Prostate gland (tissue), 2 donors: ENCODE measurements at regions of chr11 and their contacts with region 1.

Region 1: GRCh38 chr11:119356349-119357031 is 10.0 kb upstream of the MFRP start:
- DNase-seq: peak; percentile 56
- H3K4me3 ChIP-seq: peak overlapping the region; percentile 22 to 29
- H3K27ac ChIP-seq: peak overlapping the region; percentile 33 to 54
- H3K4me1 ChIP-seq: no peaks in the 10 kb centered on the region
- H3K27me3 ChIP-seq: no peaks in the 10 kb centered on the region
- CTCF ChIP-seq: peak; percentile 62 to 82 (median 79)
- POLR2A ChIP-seq: no peak

Region 2: DNA sequence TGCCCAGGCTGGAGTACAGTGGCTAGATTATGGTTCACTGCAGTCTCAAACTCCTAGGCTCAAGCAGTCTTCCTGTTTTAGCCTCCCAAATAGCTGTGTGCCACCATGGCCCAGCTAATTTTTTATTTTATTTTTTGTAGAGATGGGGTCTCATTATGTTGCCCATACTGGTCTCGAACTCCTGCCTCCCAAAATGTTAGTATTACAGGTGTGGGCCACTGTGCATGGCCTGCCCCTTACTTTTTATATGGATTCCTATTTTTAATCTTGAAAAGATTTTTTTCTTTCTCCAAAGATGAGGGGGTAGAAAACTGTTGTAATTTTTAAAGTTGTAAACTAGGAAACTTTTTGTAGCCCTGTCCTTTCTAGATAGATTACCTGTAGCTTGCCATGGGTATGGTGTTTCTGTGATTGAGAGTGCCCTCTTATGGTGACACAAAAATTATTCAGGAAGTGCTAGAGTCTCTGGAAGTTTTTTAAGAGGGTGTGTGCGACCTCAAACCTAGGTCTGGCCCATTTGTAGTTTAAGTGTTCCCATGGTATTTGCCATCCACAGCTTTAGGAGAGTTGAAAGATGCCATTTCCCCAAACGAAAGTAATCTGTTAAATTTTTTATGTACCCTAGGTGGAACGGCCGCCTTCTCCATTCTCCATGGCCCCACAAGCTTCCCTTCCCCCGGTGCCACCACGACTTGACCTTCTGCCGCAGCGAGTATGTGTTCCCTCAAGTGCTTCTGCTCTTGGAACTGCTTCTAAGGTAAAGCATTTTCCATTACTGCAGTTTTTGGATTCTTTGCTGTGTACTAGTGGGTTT is 71.9 kb before region 1 on chr11:
- intact Hi-C with region 1: no loop called
- DNase-seq: no peak
- H3K4me3 ChIP-seq: no peak overlapping the region
- H3K27ac ChIP-seq: no peak overlapping the region
- H3K4me1 ChIP-seq: no peaks in the 10 kb centered on the region
- H3K27me3 ChIP-seq: no peaks in the 10 kb centered on the region
- CTCF ChIP-seq: peak in 3 of 4 experiments; percentile 31 to 44 (median 42)
- POLR2A ChIP-seq: no peak

Region 3: GRCh38 chr11:119373921-119374631 is 17.6 kb after region 1 on chr11:
- intact Hi-C with region 1: loop called (anchors 2 kb)
- DNase-seq: peak; percentile 55
- H3K4me3 ChIP-seq: no peak overlapping the region
- H3K27ac ChIP-seq: peak overlapping the region; percentile 77 to 80
- H3K4me1 ChIP-seq: peaks cover 12% of the 10 kb centered on the region
- H3K27me3 ChIP-seq: no peaks in the 10 kb centered on the region
- CTCF ChIP-seq: peak; percentile 59 to 89 (median 74)
- POLR2A ChIP-seq: no peak

Region 4: DNA sequence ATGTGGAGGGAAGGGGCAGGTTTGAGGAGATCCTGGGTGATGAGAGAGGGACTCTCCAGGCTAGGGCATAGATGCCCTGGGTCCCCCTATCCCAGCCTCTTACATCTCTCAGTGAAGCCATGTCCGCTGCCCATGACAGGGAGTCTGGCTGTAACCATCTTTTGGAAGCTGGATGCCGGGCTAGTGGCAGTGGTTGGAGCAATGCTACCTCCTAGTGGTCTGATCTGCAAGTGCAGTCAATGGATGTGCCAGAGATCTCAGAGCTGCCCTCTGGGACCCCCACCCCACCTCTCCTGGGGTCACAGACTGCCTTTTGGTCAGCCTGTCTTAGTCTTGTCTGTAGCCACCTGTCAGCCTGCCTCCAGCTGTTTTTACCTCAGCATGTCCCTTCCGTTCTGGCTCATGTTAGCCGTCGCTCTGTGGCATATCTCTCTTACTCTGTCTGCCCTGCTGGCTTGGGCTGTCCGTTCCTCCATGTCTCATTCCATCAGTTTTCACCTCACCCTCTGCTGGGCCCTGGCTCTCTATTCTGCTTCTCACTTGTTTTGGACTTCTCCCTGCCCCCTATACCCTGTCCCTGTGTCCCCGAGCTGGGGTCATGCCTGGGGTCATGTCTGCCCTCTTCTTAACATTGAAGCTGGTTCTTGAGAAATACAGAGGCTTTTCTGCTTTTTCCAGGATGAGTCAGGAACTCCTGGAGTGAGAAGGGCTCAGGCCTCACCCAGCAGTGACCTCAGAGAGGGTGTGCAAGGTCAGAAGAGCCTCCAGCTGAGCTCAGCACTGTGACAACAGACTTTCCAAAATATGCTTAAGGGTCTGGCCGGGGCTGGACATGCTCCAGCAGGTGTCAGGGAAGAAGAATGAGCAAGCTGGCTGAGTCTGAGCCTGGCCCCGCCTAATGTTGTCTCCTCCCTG is 118.4 kb after region 1 on chr11:
- intact Hi-C with region 1: loop called (anchors 2 kb)
- DNase-seq: peak; percentile 54
- H3K4me3 ChIP-seq: no peak overlapping the region
- H3K27ac ChIP-seq: no peak overlapping the region
- H3K4me1 ChIP-seq: no peaks in the 10 kb centered on the region
- H3K27me3 ChIP-seq: no peaks in the 10 kb centered on the region
- CTCF ChIP-seq: peak; percentile 71 to 87 (median 79)
- POLR2A ChIP-seq: no peak